Activated naive CD4-positive, alpha-beta T cell treated with anti-CD3 and anti-CD28 coated beads, Interleukin-2, amount 10 ng/mL, durations not matched to agents 7 days and 5 days (primary cell): ENCODE measurements at regions of chr7 and their contacts with region 1.

Region 1: GRCh38 chr7:51141451-51142003 is 175.1 kb downstream of the COBL start:
- DNase-seq: peak; percentile 30
- H3K4me3 Mint-ChIP-seq: no peak overlapping the region
- H3K27ac Mint-ChIP-seq: no peak overlapping the region
- H3K4me1 Mint-ChIP-seq: peaks cover 16% of the 10 kb centered on the region
- H3K27me3 Mint-ChIP-seq: peaks cover 14% of the 10 kb centered on the region

Region 2: GRCh38 chr7:50409856-50410745 is 731.4 kb before region 1 on chr7:
- CTCF ChIA-PET with region 1: no interaction called
- DNase-seq: no peak
- H3K4me3 Mint-ChIP-seq: no peak overlapping the region
- H3K27ac Mint-ChIP-seq: peak overlapping the region; percentile 16
- H3K4me1 Mint-ChIP-seq: peaks cover 55% of the 10 kb centered on the region
- H3K27me3 Mint-ChIP-seq: no peaks in the 10 kb centered on the region

Region 3: GRCh38 chr7:51070151-51070550 is 71.4 kb before region 1 on chr7:
- CTCF ChIA-PET with region 1: interaction called, 14 read pairs
- DNase-seq: no peak
- H3K4me3 Mint-ChIP-seq: no peak overlapping the region
- H3K27ac Mint-ChIP-seq: no peak overlapping the region
- H3K4me1 Mint-ChIP-seq: no peaks in the 10 kb centered on the region
- H3K27me3 Mint-ChIP-seq: no peaks in the 10 kb centered on the region

Region 4: GRCh38 chr7:51121931-51122425 is 19.5 kb before region 1 on chr7:
- CTCF ChIA-PET with region 1: interaction called, 21 read pairs
- DNase-seq: no peak
- H3K4me3 Mint-ChIP-seq: peak overlapping the region; percentile 38
- H3K27ac Mint-ChIP-seq: peak overlapping the region; percentile 75
- H3K4me1 Mint-ChIP-seq: peaks cover 34% of the 10 kb centered on the region
- H3K27me3 Mint-ChIP-seq: no peaks in the 10 kb centered on the region

Region 5: DNA sequence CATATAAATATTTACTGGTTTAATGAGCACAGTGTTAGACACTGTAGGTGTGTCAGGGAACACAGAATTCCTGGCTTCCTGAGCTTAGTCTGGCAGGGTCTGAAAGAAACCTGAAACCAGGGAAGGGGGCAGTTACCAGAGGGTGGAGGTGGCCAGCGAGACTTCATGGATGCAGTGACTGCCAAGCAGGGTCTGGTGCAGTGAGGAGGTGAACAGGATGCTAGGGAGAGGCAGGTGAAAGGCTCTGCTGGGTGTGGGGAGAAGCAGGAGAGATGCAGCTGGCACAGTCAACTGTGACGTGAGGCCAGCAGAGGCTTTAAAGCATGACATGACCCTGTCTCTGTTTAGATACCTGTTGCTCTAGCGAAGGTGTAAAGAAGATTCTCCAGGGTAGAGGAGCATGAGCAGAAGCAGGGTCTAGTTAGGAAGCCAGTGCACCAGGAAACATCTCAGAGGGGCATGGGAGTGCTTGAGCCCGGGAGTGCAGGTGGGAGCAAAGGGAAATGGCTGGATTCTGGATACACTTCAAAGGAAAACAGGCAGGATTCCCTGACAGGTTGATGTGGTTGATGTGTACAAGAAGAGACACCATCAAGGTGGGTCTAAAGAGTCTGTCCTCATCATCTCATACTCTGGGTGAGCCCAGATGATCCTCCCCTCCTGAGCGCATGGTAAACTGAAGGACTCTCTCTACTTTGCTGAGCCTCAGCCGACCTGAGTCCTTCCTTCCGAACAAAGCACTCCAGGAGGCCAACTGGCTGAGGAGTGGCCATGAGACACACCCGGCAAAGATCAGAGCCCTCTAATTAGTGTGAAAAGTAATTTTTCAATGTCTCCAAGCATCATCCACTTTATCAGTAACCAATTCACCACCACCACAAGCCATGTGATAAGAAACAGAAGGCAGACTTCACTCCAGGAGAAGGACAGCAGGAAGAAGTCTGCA is 11.7 kb before region 1 on chr7:
- CTCF ChIA-PET with region 1: interaction called, 21 read pairs
- DNase-seq: no peak
- H3K4me3 Mint-ChIP-seq: no peak overlapping the region
- H3K27ac Mint-ChIP-seq: no peak overlapping the region
- H3K4me1 Mint-ChIP-seq: no peaks in the 10 kb centered on the region
- H3K27me3 Mint-ChIP-seq: peaks cover 4% of the 10 kb centered on the region

Region 6: DNA sequence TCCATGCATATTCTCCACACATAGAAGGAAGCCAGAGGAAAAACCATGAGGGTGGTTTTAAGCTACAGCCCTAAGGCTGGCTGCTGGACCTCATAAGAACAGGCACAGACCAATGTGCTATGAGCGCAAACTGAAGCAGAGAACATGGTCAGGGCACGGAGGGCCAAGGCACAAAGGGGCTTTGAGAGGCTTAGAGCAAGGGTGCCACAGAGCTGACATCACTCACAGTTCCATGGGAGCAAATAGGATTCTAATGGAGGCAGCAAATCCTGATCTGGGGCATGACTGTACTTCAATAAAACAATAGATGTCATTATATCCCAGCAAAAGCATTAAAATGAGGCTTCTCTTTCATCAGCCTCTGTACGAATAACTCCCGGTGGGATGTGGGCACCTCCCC is 12.7 kb after region 1 on chr7:
- CTCF ChIA-PET with region 1: interaction called, 10 read pairs
- DNase-seq: no peak
- H3K4me3 Mint-ChIP-seq: no peak overlapping the region
- H3K27ac Mint-ChIP-seq: no peak overlapping the region
- H3K4me1 Mint-ChIP-seq: no peaks in the 10 kb centered on the region
- H3K27me3 Mint-ChIP-seq: peaks cover 18% of the 10 kb centered on the region

Region 7: DNA sequence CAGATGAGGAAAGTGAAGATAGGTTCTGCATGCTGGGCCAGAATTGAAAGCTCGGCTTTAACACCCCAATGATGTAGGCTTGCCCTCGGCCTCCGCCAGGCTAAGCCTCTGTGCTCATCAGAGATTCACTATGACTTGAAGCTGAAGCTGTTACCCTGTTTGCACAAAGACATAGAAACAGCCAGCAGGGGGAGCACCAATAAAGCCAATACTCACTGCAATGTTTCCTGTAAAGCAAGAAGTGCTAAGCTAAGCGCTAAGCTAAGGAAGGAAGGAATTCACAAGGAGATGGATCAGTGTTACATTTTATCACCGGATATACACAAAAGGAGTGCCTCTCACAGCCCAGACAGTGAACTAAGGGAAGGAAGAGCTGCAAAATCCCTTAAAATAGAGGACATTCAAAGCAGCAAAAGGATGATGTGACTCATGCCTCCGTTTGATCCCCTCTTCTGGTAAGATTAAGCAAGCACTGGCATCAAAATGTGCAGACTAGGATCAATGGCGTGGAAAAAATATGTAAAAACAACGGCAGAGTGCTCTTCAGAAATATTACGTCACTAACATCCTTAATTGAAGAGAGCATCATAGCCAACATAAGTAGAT is 21.3 kb after region 1 on chr7:
- CTCF ChIA-PET with region 1: interaction called, 30 read pairs
- DNase-seq: peak; percentile 81
- H3K4me3 Mint-ChIP-seq: no peak overlapping the region
- H3K27ac Mint-ChIP-seq: no peak overlapping the region
- H3K4me1 Mint-ChIP-seq: no peaks in the 10 kb centered on the region
- H3K27me3 Mint-ChIP-seq: peaks cover 15% of the 10 kb centered on the region